Activated CD8-positive, alpha-beta T cell treated with anti-CD3 and anti-CD28 coated beads for 36 hours (primary cell): ENCODE measurements at regions of chr10 and their contacts with region 1.

Region 1: DNA sequence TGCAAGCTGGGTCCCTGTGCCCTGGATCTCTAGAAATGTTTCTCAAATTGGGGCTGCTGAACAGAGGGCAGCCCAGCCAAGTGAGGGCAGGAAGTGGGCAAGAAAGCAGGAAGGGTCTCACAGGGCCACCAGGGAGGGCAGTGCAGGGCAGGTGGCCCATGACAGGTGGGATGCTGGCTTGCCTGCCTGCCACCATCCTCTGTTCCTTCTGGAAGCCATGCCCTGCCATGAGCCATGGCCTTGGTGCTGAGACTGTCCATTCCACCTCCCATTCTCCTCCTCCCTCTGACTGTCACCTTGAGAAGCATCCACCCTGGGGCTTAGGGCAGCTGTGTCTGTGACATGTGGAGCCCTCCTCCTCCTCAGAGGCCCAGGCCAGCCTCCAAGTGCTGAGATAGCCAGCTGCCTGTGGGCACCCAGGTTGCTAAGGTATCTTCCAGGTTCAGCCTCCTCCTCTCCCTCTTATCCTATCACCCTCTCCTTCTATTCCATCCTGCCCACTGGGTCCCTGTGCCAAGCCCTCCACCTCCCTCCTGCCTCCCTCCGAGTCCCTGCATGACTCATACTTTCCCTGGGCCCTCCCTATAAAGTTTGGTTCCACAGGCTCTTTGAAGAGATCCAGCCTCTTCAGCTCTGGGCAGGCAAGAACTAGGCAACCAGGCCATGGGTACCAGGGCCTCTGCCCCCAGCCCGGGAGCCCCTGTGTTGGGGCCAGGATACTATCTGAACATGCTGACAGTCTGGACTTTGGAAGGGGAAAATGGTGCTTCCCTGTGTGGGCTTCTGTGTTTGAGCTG is 1.3 kb downstream of the VSIR start:
- DNase-seq: peak; percentile 63
- ATAC-seq: no peak
- H3K4me3 Mint-ChIP-seq: peak overlapping the region; percentile 91
- H3K27ac Mint-ChIP-seq: peak overlapping the region; percentile 95
- H3K4me1 Mint-ChIP-seq: peaks cover 77% of the 10 kb centered on the region
- H3K27me3 Mint-ChIP-seq: no peaks in the 10 kb centered on the region
- CTCF ChIP-seq: no peak

Region 2: GRCh38 chr10:71597821-71598498 is 174.1 kb before region 1 on chr10:
- CTCF ChIA-PET with region 1: no interaction called
- POLR2A ChIA-PET with region 1: no interaction called
- intact Hi-C with region 1: no loop called
- DNase-seq: no peak
- ATAC-seq: no peak
- H3K4me3 Mint-ChIP-seq: no peak overlapping the region
- H3K27ac Mint-ChIP-seq: no peak overlapping the region
- H3K4me1 Mint-ChIP-seq: peaks cover 12% of the 10 kb centered on the region
- H3K27me3 Mint-ChIP-seq: no peaks in the 10 kb centered on the region
- CTCF ChIP-seq: no peak

Region 3: GRCh38 chr10:71713135-71714030 is 58.6 kb before region 1 on chr10:
- CTCF ChIA-PET with region 1: interaction called, 29 read pairs
- POLR2A ChIA-PET with region 1: interaction called, 17 read pairs
- intact Hi-C with region 1: no loop called
- DNase-seq: peak; percentile 61
- ATAC-seq: peak; percentile 61
- H3K4me3 Mint-ChIP-seq: peak overlapping the region; percentile 70
- H3K27ac Mint-ChIP-seq: peak overlapping the region; percentile 96
- H3K4me1 Mint-ChIP-seq: peaks cover 65% of the 10 kb centered on the region
- H3K27me3 Mint-ChIP-seq: no peaks in the 10 kb centered on the region
- CTCF ChIP-seq: no peak

Region 4: DNA sequence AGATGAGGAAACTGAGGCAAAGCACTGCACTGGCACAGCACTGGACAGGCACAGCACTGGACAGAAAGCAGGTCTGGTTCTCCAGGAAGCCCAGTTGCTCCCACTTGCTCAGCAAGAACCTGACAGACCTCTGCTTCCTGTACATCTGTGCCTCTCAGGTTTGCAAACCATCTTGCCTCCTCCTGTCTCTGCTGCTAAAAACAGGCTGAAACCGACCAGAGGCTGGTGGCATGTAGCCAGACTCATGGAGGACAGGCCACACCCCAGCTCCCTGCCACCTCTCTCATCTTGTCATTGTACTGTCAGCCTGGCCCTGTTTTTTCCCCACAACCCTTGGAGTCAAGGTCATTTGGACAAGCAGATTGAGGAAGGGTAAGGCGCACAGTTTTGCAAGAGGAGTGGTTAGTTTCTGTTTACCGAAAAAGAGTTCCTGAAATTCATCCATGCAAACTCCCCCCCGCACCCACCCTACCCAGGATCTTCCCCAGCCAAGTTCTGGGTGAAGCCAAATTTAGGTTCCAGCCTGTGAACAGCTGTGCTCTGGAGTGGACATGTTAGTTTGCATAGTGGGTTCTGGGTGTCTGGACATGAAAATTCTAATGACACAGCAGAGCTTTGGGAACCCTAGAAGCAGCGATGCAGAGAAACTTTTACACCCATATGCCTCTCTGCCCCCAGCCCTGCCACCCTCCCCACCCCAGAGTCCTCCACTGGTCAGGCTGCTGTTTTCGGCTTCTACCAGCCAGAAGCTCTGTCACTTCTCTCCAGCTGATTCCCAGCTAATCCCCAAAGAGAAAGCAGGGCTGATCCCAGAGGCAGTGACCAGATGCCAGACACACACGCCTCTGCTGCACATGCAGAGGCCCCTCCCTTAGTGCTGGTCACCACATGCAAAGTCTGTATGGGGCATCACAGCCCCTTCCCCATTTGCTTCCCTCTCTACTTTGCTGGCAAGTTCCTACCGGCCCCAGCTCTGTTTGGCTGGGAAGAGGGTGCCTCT is 44.0 kb before region 1 on chr10:
- CTCF ChIA-PET with region 1: interaction called, 44 read pairs
- POLR2A ChIA-PET with region 1: interaction called, 116 read pairs
- intact Hi-C with region 1: loop called (anchors 1 kb)
- DNase-seq: peak; percentile 89
- ATAC-seq: peak; percentile 37
- H3K4me3 Mint-ChIP-seq: peak overlapping the region; percentile 58
- H3K27ac Mint-ChIP-seq: peak overlapping the region; percentile 99
- H3K4me1 Mint-ChIP-seq: peaks cover 97% of the 10 kb centered on the region
- H3K27me3 Mint-ChIP-seq: no peaks in the 10 kb centered on the region
- CTCF ChIP-seq: no peak

Region 5: GRCh38 chr10:71748671-71749191 is 23.3 kb before region 1 on chr10:
- CTCF ChIA-PET with region 1: interaction called, 17 read pairs
- POLR2A ChIA-PET with region 1: interaction called, 92 read pairs
- intact Hi-C with region 1: no loop called
- DNase-seq: peak; percentile 89
- ATAC-seq: peak; percentile 88
- H3K4me3 Mint-ChIP-seq: peak overlapping the region; percentile 59
- H3K27ac Mint-ChIP-seq: peak overlapping the region; percentile 98
- H3K4me1 Mint-ChIP-seq: peaks cover 96% of the 10 kb centered on the region
- H3K27me3 Mint-ChIP-seq: no peaks in the 10 kb centered on the region
- CTCF ChIP-seq: no peak

Region 6: DNA sequence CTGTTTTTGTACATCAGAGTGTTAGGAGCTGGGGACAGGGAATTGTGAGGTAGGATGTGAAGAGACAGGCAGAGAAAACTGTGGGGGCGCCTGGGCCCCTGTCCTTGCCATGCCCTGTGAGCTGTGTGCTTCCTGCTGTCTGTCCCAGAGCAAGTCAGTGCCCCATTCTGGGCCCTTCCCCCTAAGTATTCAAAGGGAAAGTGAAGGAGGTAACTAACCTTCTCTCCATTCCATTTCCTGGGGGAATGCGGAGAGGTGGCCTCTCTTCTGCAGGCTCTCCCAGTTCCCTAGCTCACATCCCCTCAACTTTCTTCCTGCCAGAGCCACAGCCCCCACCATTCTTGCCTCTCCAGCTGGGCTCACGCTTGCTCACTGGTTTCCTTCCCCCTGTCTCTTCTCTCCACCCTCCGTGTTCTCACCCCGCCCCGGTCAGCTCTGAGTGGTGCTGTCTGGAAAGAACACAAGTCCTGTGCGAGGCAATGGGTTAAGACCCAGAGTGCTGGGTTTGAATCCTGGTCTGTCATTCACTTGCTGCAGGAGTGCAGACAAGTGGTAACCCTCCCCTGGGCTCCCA is 11.0 kb after region 1 on chr10:
- CTCF ChIA-PET with region 1: interaction called, 11 read pairs
- POLR2A ChIA-PET with region 1: interaction called, 5 read pairs
- intact Hi-C with region 1: no loop called
- DNase-seq: no peak
- ATAC-seq: no peak
- H3K4me3 Mint-ChIP-seq: no peak overlapping the region
- H3K27ac Mint-ChIP-seq: no peak overlapping the region
- H3K4me1 Mint-ChIP-seq: peaks cover 12% of the 10 kb centered on the region
- H3K27me3 Mint-ChIP-seq: no peaks in the 10 kb centered on the region
- CTCF ChIP-seq: no peak